ENCODE measurements at regions of chr5 and their contacts with region 1.

Region 1: DNA sequence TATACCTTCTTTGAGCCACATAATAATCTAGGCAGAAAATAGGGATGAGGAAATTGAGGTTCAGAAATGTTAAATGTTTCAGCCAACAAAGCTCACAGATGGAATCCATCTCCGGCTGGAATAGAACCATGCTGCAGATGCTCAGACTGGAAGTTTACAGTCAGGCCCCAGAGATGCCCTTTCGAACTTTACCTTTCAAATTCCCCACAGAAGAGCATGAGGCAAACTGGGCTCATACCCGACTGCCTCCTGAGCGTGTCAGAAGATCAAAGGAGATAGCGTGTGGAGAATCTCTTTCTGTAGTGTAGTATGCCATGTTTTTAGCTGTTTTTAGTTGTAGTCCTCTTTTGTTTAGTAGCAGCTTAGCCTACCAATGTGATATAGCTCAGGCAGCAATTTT is 72.0 kb upstream of the DAP start:
- DNase-seq: peak; percentile 45
- H3K4me3 ChIP-seq: no peak overlapping the region
- H3K27ac ChIP-seq: peak overlapping the region; percentile 63
- H3K27me3 ChIP-seq: no peaks in the 10 kb centered on the region
- CTCF ChIP-seq: no peak

Region 2: DNA sequence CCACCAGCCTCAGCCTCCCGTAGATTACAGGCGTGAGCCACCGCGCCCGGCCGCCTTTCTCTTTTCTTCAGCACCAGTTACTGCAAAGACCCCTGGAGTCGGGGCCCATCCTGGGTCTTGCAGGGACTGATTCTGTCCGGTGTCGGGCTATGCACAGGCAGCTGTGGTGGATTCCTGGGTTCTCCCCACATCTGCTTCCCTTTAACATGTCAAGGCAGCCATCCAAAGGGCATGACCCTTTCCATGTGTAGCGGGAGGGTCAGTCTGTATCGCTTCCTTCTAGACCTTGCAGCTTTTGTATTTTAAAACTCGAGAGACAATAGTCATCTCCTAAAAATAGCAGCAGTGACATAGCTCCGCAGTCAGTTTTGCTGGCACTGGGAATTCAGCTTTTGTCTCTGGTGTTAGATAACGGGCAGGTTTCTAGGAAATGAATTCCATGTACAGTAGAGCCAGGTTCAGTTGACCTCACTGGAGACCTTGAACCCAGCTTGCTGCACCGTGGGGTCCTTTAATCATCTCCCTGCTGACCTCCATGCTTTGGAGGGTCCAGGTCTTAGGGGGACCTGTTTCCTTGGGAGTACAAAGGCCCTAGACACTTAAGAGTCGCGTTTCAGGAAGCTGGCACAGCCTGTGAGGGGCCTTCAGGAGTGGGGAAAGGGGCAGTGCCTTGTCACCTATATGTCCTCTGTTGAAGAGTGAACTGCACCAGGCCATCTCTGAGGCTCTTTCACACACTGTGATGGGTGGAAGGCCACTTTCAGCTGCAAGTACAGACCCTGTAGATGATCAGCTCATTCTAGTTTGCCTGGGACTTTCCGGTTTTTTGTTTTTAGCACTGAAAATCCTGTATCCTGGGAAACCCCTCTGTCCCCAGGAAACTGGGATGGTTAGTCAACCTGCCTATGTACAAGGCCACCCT is 255.4 kb before region 1 on chr5:
- CTCF ChIA-PET with region 1: no interaction called
- POLR2A ChIA-PET with region 1: no interaction called
- DNase-seq: no peak
- H3K4me3 ChIP-seq: no peak overlapping the region
- H3K27ac ChIP-seq: no peak overlapping the region
- H3K27me3 ChIP-seq: no peaks in the 10 kb centered on the region
- CTCF ChIP-seq: no peak

Region 3: GRCh38 chr5:10863763-10864383 is 30.9 kb after region 1 on chr5:
- CTCF ChIA-PET with region 1: interaction called, 13 read pairs
- POLR2A ChIA-PET with region 1: no interaction called
- DNase-seq: no peak
- H3K4me3 ChIP-seq: no peak overlapping the region
- H3K27ac ChIP-seq: no peak overlapping the region
- H3K27me3 ChIP-seq: no peaks in the 10 kb centered on the region
- CTCF ChIP-seq: peak; percentile 76